ENCODE measurements at regions of chr3 and their contacts with region 1.

Region 1: DNA sequence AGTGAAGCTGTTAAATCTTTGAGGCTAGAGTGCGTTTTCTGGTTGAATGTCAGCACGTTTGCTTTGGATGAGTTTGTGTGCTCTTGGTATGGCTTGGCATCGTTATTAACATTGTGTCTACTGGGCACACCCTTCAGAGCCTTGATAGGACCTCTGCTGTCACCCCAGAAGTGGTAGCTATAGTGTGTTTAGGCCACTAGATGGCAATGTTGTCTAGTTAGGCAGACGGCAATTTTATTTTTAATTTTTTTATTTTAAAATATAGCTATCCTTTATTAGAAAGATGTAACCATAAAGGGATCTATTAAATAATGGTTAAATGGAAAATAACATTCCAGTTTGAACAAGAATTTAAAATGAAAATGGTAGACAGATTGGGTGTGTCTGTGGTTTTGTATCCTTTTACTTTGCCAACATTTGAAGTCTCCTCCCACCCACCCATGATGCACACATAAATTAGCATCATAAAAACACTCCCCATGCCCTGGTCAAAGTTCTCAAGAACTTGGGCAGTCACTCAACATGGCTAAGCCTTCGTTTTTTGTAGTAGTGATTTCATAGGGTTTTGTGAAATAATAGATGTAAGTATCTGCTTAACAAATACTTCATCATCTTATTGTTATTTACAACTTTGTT is 200.7 kb downstream of the KCNH8 start:
- DNase-seq: no peak
- H3K4me3 Mint-ChIP-seq: no peak overlapping the region
- H3K27ac Mint-ChIP-seq: no peak overlapping the region
- H3K4me1 Mint-ChIP-seq: peaks cover 4% of the 10 kb centered on the region
- H3K27me3 Mint-ChIP-seq: peaks cover 7% of the 10 kb centered on the region

Region 2: GRCh38 chr3:19384868-19385267 is 35.8 kb after region 1 on chr3:
- intact Hi-C with region 1: no loop called
- DNase-seq: no peak
- H3K4me3 Mint-ChIP-seq: no peak overlapping the region
- H3K27ac Mint-ChIP-seq: no peak overlapping the region
- H3K4me1 Mint-ChIP-seq: no peaks in the 10 kb centered on the region
- H3K27me3 Mint-ChIP-seq: no peaks in the 10 kb centered on the region

Region 3: DNA sequence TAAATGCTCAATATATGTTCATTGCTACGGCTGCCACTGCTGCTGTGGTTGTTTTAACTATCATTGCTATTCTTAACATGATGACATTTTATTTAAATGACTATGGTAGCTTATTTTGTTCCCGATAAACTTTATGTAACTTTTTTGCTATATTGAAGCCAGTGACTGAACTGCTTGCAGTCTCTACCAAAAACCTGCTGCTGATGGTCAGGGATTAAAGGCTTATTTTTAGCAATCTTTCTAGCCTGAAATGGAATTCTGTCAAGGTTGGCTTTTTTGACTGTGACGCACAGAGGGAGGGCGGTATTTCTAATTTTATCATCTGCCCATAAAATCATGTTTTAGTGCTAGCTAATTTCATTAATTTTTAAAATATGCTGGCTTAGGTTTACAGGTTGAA is 71.1 kb after region 1 on chr3:
- intact Hi-C with region 1: no loop called
- DNase-seq: no peak
- H3K4me3 Mint-ChIP-seq: no peak overlapping the region
- H3K27ac Mint-ChIP-seq: no peak overlapping the region
- H3K4me1 Mint-ChIP-seq: no peaks in the 10 kb centered on the region
- H3K27me3 Mint-ChIP-seq: no peaks in the 10 kb centered on the region

Region 4: GRCh38 chr3:19543212-19543841 is 194.3 kb after region 1 on chr3:
- intact Hi-C with region 1: loop called (anchors 2 kb)
- DNase-seq: no peak
- H3K4me3 Mint-ChIP-seq: no peak overlapping the region
- H3K27ac Mint-ChIP-seq: no peak overlapping the region
- H3K4me1 Mint-ChIP-seq: no peaks in the 10 kb centered on the region
- H3K27me3 Mint-ChIP-seq: no peaks in the 10 kb centered on the region

Region 5: GRCh38 chr3:19866751-19867347 is 517.8 kb after region 1 on chr3:
- intact Hi-C with region 1: loop called (anchors 2 kb)
- DNase-seq: peak; percentile 13
- H3K4me3 Mint-ChIP-seq: no peak overlapping the region
- H3K27ac Mint-ChIP-seq: no peak overlapping the region
- H3K4me1 Mint-ChIP-seq: no peaks in the 10 kb centered on the region
- H3K27me3 Mint-ChIP-seq: peaks cover 8% of the 10 kb centered on the region

Measured in activated T-helper 2 cell treated with anti-CD3 and anti-CD28 coated beads, Interferon-gamma antibody, Interleukin-2, Interleukin-4, amounts not matched to agents 10 μg/mL and 5 μg/mL and 100 μg/mL, durations not matched to agents 14 hours and 24 hours and 36 hours (primary cell).